OCI-LY7 (cell line): ENCODE measurements at regions of chr10 and their contacts with region 1.

Region 1: DNA sequence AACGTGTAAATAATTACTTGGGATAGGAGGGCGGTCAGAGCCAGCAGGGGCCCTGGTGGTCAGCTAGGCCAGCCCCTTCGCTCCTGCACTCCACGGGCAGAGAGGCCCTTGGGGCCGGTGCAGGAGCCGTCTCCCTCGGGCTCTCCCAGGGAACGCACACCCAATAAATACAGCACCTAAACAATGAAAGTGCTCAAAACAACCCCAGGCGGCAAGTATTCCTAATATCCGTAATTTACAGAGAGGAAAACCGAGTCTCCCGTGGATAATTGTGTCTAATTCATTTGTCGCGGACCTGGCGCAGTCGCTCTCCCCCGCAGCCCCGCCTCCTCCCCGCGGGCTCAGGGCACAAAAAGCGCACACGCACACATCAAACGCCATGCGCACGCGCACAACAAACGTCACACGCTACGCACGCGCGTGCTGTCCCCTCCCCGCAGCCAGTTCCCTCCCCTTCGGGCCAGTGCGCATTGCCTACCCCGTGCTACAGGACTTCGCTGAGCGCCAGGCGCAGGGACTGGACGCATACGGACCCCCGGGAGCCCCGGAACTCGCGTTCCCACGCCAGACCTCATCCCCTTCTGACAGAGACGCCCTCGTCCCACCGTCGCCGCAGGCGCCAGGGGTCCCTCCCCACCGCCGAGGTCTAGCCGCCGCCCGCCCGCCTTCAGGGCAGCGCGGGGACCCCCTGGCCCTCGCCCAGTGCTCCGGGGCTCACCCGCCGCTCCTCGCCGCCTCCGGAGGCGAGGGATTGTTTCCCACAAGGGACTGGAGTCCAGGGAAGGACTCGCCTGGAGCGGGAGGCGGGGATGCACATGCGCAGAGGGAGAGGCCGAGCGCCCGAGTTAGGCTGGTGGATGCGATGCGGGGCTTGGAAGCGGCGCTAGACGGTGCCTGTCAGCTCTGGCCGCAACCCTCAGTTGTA is at the start of gene ZNF248:
- DNase-seq: peak; percentile 97
- H3K4me3 ChIP-seq: peak within 1 kb of the TSS; percentile 84
- H3K27ac ChIP-seq: peak within 1 kb of the TSS; percentile 24
- H3K4me1 ChIP-seq: peaks cover 34% of the 10 kb centered on the region
- CTCF ChIP-seq: no peak
- total RNA-seq, gene ZNF248: 13.4 and 16.8 TPM in 2 replicates

Region 2: GRCh38 chr10:38094158-38094920 is 236.8 kb after region 1 on chr10 and contains the start of gene ZNF37A:
- CTCF ChIA-PET with region 1: no interaction called
- POLR2A ChIA-PET with region 1: interaction called, 3 read pairs
- intact Hi-C with region 1: loop called (anchors 1 kb)
- DNase-seq: peak; percentile 96
- H3K4me3 ChIP-seq: peak within 1 kb of the TSS; percentile 81
- H3K27ac ChIP-seq: peak within 1 kb of the TSS; percentile 28
- H3K4me1 ChIP-seq: peaks cover 12% of the 10 kb centered on the region
- CTCF ChIP-seq: no peak
- total RNA-seq, gene ZNF37A: 21.2 and 21.6 TPM in 2 replicates